PC-9 (cell line): ENCODE measurements at regions of chr10 and their contacts with region 1.

Region 1: DNA sequence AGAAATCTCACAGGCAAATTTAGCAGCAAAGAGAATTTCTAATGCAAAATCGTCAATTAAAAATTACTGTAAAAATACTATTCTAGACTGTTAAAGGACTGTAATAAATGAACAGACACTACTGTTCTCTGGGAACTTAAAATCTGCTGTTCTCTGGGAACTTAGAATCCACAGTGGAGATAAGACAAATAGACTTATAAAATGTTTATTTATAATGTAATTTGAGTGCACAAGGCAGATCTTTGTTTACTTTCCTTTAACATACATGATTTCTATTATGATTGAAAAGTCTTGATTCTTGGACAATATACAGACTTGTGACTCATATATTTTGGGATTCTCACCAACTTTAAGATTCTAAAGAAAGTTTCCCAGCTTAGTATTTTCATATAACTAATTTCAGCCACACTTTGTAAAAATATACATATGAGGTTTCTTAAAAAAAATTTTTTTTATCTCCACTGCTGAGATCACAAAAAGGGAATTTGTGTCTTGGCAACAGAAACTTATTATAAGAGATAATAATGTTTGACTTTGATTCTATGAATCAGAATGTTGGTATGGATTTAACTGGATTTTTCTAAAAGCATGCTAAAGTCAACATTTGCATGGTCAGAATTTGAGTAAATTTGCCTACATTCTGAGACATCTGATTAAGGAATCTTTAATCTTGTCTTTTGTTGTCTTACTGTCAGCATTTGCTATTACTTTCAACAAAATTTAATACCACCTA is 166.4 kb upstream of the RHOBTB1 start:
- DNase-seq: no peak
- H3K4me3 ChIP-seq: no peak overlapping the region
- H3K27ac ChIP-seq: no peak overlapping the region
- H3K4me1 ChIP-seq: no peaks in the 10 kb centered on the region
- H3K27me3 ChIP-seq: no peaks in the 10 kb centered on the region
- CTCF ChIP-seq: no peak

Region 2: GRCh38 chr10:61271127-61271823 is 160.9 kb after region 1 on chr10:
- CTCF ChIA-PET with region 1: no interaction called
- POLR2A ChIA-PET with region 1: interaction called, 34 read pairs
- intact Hi-C with region 1: no loop called
- DNase-seq: peak in 1 of 2 experiments; percentile 84
- H3K4me3 ChIP-seq: no peak overlapping the region
- H3K27ac ChIP-seq: no peak overlapping the region
- H3K4me1 ChIP-seq: peaks cover 10% of the 10 kb centered on the region; the same call in 1 of the 2 replicates
- H3K27me3 ChIP-seq: no peaks in the 10 kb centered on the region
- CTCF ChIP-seq: peak; percentile 55